ENCODE measurements at regions of chrX and their contacts with region 1.

Region 1: DNA sequence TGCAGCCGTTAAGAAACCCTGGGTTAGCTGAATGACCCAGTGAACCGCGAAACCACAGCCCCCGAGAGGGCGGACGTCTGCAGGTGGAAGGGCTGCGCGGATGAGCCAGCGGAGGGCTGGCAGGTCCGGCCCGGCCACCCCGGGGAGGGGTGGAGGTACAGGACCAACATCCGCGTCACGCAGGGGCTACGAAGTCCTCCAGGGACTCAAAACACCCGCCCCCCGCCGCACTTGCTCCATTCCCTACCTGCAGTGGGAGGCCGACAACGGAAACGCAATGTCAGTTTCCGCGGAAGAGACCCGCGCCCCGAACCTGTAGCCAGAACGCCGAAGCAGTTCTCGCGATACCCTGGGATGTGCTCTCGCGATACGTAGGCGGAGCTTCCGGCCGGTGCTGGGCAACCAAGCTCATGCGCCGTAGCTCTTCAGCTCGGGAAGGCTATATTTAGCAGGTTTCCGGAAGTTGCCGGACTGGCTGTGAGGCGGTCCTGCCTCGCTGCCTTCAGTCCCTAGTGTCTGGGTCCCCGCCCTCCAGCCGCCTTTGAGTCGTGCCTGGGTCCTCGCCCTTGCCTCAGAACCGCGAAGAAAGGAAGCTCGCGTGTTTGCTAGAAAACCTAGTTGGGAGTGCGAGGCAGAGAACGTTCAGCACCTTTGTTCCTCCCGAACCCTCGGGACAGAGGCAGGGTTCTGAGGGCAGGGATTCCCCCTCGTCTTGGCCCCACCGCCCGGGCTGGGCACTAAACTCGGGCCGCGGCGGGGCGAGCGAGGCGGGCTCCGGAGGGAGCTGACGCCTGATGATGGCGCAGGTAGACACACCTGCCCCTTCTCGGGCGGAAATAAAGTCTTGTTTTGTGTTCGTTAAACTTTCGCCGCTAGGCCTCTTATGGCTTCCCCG is at the starts of genes OFD1 and TRAPPC2:
- DNase-seq: peak; percentile 96
- H3K4me3 ChIP-seq: peak within 1 kb of the TSS; percentile 73
- H3K27ac ChIP-seq: peak within 1 kb of the TSS; percentile 82
- H3K4me1 ChIP-seq: no peaks in the 10 kb centered on the region
- H3K27me3 ChIP-seq: no peaks in the 10 kb centered on the region
- CTCF ChIP-seq: no peak
- total RNA-seq, gene OFD1: 25.8 and 28.6 TPM in 2 replicates
- total RNA-seq, gene TRAPPC2: 18.3 and 19.5 TPM in 2 replicates

Region 2: GRCh38 chrX:13520936-13521335 is 213.6 kb before region 1 on chrX:
- CTCF ChIA-PET with region 1: no interaction called
- POLR2A ChIA-PET with region 1: no interaction called
- intact Hi-C with region 1: no loop called
- DNase-seq: no peak
- H3K4me3 ChIP-seq: no peak overlapping the region
- H3K27ac ChIP-seq: no peak overlapping the region
- H3K4me1 ChIP-seq: peaks cover 7% of the 10 kb centered on the region
- H3K27me3 ChIP-seq: no peaks in the 10 kb centered on the region
- CTCF ChIP-seq: no peak

Region 3: DNA sequence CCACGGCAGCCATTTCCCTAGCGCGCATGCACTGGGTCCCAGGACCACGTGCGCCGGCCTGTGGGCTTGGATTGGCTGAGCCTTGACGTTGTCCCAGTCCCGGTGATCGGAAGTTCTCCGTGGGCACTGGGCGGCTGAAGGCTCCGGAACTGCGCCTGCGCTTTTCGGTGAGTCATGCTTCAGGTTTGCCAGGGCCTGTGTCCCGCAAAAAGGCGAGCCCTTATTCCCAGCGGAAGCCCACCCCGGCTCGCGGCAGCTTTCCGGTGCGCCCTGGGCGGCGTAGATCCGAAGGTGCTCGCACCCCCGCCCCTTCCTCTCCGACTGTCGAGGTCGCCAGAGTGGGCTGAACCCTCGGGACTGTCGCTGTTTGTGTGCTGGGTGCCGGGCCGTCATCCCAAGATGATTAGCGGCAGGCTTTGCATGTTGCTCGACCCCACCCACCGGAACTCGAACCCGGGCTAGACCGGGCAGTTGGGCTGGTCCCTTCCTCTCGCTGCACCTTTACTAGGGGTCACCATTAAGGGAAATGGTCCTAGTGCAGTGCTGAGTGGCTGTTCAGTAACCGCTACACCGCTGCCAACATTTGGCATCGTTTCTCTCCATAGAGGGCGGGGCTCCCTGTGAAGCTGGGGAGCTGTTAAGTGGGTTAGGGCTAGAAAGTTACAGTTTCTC is 81.4 kb before region 1 on chrX and contains the start of gene TCEANC:
- CTCF ChIA-PET with region 1: interaction called, 4 read pairs
- POLR2A ChIA-PET with region 1: no interaction called
- intact Hi-C with region 1: loop called (anchors 5 kb)
- DNase-seq: peak; percentile 98
- H3K4me3 ChIP-seq: peak within 1 kb of the TSS; percentile 59
- H3K27ac ChIP-seq: peak within 1 kb of the TSS; percentile 78
- H3K4me1 ChIP-seq: no peaks in the 10 kb centered on the region
- H3K27me3 ChIP-seq: no peaks in the 10 kb centered on the region
- CTCF ChIP-seq: no peak
- total RNA-seq, gene TCEANC: 3.1 and 3.9 TPM in 2 replicates

Measured in A673 (cell line).